Naive thymus-derived CD4-positive, alpha-beta T cell (primary cell): ENCODE measurements at regions of chr12 and their contacts with region 1.

Region 1: DNA sequence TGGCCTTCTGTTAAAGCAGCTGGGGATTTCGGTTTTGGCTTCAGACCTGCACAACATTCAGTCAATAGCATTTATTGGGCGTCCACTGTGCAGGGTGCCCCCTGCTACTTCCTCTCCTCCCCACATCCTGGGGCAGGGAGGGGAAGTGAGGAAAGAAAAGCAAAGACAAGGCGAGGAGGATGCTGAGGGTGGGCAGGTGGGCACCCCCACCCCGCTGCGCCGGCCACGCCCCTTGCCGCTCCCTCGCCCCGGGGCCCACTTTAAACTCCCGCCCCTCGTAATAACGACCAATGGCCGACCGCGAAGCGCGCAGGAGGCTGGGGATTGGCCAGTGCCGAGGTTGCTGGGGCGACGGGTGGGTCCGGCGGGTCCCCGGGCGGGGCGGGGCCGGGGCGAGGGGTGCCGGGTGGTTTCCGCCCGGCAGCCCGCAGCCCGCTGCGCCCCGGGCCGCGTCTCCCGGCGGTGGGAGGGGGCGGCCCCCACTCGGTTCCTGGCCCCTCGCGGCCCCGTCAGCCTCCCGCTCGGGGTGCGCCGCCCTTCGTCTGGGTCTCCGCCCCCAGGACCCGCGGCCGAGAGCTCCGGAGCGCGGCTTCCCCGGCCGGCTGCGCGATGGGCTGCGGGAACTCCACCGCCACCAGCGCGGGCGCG is at the start of gene C12orf75:
- DNase-seq: peak; percentile 62 to 94 (median 72)
- ATAC-seq: peak; percentile 91
- H3K4me3 ChIP-seq: peak within 1 kb of the TSS; percentile 56
- H3K4me3 Mint-ChIP-seq: peak within 1 kb of the TSS; percentile 82 to 94 (median 90)
- H3K27ac ChIP-seq: peak within 1 kb of the TSS; percentile 64
- H3K27ac Mint-ChIP-seq: peak within 1 kb of the TSS; percentile 65 to 95 (median 86)
- H3K4me1 ChIP-seq: peaks cover 12 to 57% of the 10 kb centered on the region in 2 donors
- H3K4me1 Mint-ChIP-seq: peaks cover 16 to 74% (median 24%) of the 10 kb centered on the region in 7 donors
- H3K27me3 ChIP-seq: no peaks in the 10 kb centered on the region
- H3K27me3 Mint-ChIP-seq: no peaks in the 10 kb centered on the region
- total RNA-seq, gene C12orf75: 5.5 to 146 (median 13.0) TPM

Region 2: DNA sequence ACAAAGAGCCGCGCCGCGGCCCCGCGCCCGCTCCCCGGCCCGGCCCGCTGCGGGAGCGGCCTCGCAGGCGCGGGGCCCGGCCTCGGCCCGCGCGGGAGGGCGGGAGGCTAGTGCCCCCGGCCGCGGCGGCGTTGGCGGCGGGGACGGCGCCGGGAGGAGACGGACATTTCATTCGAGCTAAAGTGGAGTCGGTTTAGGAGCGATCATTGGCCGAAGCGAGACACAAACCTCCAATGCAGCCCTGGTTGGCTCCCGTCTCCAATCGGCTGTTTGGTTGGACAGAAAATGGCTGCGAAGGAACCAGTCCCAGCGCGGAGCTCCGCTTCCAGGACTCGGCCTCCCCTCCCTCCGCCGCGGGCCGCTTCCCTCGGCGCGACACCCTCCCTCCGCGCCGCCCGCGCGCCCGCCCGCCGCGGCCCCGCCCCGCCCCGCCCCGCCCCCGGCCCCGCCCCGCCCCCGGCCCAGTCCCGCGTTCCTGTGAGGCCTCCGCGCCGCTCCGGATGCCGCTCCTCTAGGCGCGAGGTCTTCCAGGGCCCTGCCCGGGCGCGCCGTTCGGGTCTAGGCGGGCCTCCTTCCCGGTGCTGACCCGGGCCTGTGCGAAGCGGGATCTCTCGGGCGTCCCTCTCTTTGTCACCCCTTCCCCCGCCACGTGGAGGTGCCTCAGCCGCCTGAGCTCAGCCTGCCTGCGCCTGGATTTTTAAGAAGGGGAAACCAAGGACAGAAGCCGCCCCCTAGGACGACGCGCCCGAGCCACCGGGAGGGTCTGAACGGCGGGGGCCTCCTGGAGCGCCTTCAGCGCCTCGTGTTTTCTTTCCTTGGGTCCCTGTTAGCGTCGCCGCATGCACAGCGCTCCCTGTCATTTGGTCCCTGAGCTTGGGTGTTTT is 1192.3 kb before region 1 on chr12 and contains the start of gene NFYB:
- CTCF ChIA-PET with region 1: no interaction called
- POLR2A ChIA-PET with region 1: interaction called, 3 read pairs
- intact Hi-C with region 1: loop called (anchors 2 kb)
- DNase-seq: peak; percentile 90 to 96 (median 94)
- ATAC-seq: peak; percentile 97
- H3K4me3 ChIP-seq: peak within 1 kb of the TSS; percentile 69
- H3K4me3 Mint-ChIP-seq: peak within 1 kb of the TSS; percentile 81 to 93 (median 90)
- H3K27ac ChIP-seq: peak within 1 kb of the TSS; percentile 72
- H3K27ac Mint-ChIP-seq: peak within 1 kb of the TSS; percentile 71 to 95 (median 89)
- H3K4me1 ChIP-seq: peaks cover 10 to 23% of the 10 kb centered on the region in 2 donors
- H3K4me1 Mint-ChIP-seq: peaks cover 0 to 22% (median 9%) of the 10 kb centered on the region in 7 donors
- H3K27me3 ChIP-seq: no peaks in the 10 kb centered on the region
- H3K27me3 Mint-ChIP-seq: peaks cover 0 to 24% (median 0%) of the 10 kb centered on the region in 5 donors
- total RNA-seq, gene NFYB: 11.6 to 25.9 (median 24.4) TPM

Region 3: GRCh38 chr12:104986022-104986941 is 344.1 kb before region 1 on chr12 and contains the start of gene NOPCHAP1:
- CTCF ChIA-PET with region 1: no interaction called
- POLR2A ChIA-PET with region 1: no interaction called
- intact Hi-C with region 1: loop called in 1 of 2 experiments (anchors 5 kb)
- DNase-seq: peak; percentile 64 to 84 (median 78)
- ATAC-seq: peak; percentile 100
- H3K4me3 ChIP-seq: peak within 1 kb of the TSS; percentile 91
- H3K4me3 Mint-ChIP-seq: peak within 1 kb of the TSS; percentile 90 to 95 (median 94)
- H3K27ac ChIP-seq: peak within 1 kb of the TSS; percentile 73
- H3K27ac Mint-ChIP-seq: peak within 1 kb of the TSS; percentile 63 to 87 (median 74)
- H3K4me1 ChIP-seq: peaks cover 12 to 13% of the 10 kb centered on the region in 2 donors
- H3K4me1 Mint-ChIP-seq: peaks cover 19 to 47% (median 37%) of the 10 kb centered on the region in 7 donors
- H3K27me3 ChIP-seq: no peaks in the 10 kb centered on the region
- H3K27me3 Mint-ChIP-seq: peaks cover 0 to 13% (median 5%) of the 10 kb centered on the region in 5 donors
- total RNA-seq, gene NOPCHAP1: 10.5 to 18.0 (median 15.2) TPM

Region 4: DNA sequence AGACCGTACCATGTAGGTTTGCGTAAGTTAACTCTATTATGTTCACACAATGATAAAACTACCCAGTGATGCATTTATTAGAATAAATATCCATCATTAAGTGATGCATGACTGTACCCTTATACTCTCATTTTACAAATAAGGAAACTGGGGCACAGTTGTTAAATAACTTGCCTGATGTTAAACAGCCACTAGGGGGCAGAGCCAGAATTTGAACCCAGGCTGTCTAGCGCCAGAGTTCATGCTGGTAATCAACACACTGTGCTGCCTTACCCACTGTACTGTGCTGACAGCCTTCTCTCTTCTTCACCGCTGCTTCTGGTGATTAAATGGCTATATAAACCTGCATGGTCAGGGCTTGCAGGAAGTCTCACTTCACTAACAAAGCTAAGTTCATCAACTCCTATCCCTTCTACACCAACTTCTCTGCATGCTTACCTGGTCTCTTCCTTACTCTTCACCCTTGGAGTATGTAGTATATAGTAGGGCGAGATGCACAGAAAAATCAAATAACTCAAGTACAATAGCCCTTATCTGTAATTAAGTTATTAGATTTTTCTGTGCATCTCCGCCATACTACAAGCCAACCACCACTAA is 50.8 kb before region 1 on chr12:
- CTCF ChIA-PET with region 1: no interaction called
- POLR2A ChIA-PET with region 1: no interaction called
- intact Hi-C with region 1: loop called in 1 of 2 experiments (anchors 5 kb)
- DNase-seq: peak in 6 of 9 donors; percentile 10 to 39 (median 25)
- ATAC-seq: peak; percentile 72
- H3K4me3 ChIP-seq: no peak overlapping the region
- H3K4me3 Mint-ChIP-seq: no peak overlapping the region
- H3K27ac ChIP-seq: no peak overlapping the region
- H3K27ac Mint-ChIP-seq: no peak overlapping the region
- H3K4me1 ChIP-seq: no peaks in the 10 kb centered on the region
- H3K4me1 Mint-ChIP-seq: peaks cover 0 to 6% (median 0%) of the 10 kb centered on the region in 7 donors
- H3K27me3 ChIP-seq: no peaks in the 10 kb centered on the region
- H3K27me3 Mint-ChIP-seq: peaks cover 0 to 14% (median 4%) of the 10 kb centered on the region in 5 donors

Region 5: GRCh38 chr12:106247674-106248311 is 917.4 kb after region 1 on chr12 and contains the start of gene CKAP4:
- CTCF ChIA-PET with region 1: no interaction called
- POLR2A ChIA-PET with region 1: no interaction called
- intact Hi-C with region 1: loop called in 1 of 2 experiments (anchors 5 kb)
- DNase-seq: peak; percentile 45 to 65 (median 55)
- ATAC-seq: peak; percentile 59
- H3K4me3 ChIP-seq: peak within 1 kb of the TSS; percentile 69
- H3K4me3 Mint-ChIP-seq: peak within 1 kb of the TSS; percentile 81 to 92 (median 86)
- H3K27ac ChIP-seq: peak within 1 kb of the TSS; percentile 80
- H3K27ac Mint-ChIP-seq: peak within 1 kb of the TSS; percentile 58 to 98 (median 94)
- H3K4me1 ChIP-seq: peaks cover 17 to 22% of the 10 kb centered on the region in 2 donors
- H3K4me1 Mint-ChIP-seq: peaks cover 13 to 37% (median 31%) of the 10 kb centered on the region in 7 donors
- H3K27me3 ChIP-seq: no peaks in the 10 kb centered on the region
- H3K27me3 Mint-ChIP-seq: peaks cover 0 to 19% (median 0%) of the 10 kb centered on the region in 5 donors
- total RNA-seq, gene CKAP4: 4.3 to 27.2 (median 13.0) TPM

Region 6: DNA sequence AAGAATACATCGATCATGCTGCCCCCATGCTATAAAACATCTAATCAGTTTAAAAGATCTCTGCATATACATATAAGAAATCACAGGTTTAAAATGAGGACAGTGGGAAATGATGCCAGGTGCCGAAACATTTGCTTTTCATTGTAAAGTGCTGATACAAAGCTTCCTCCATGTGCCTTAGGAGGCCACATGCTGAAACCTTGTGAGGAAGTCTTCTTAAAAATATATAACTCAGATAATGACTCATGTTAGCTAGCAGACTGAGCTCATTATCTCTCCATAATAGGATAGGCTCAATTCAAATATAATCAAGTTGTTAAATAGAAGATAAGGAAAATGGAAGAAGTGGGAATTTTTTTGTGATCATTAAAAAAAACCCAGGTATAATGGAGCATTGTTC is 1318.3 kb after region 1 on chr12:
- CTCF ChIA-PET with region 1: no interaction called
- POLR2A ChIA-PET with region 1: no interaction called
- intact Hi-C with region 1: no loop called
- DNase-seq: no peak
- ATAC-seq: no peak
- H3K4me3 ChIP-seq: no peak overlapping the region
- H3K4me3 Mint-ChIP-seq: no peak overlapping the region
- H3K27ac ChIP-seq: no peak overlapping the region
- H3K27ac Mint-ChIP-seq: no peak overlapping the region
- H3K4me1 ChIP-seq: no peaks in the 10 kb centered on the region
- H3K4me1 Mint-ChIP-seq: peaks cover 0 to 2% (median 0%) of the 10 kb centered on the region in 7 donors
- H3K27me3 ChIP-seq: no peaks in the 10 kb centered on the region
- H3K27me3 Mint-ChIP-seq: peaks cover 0 to 14% (median 5%) of the 10 kb centered on the region in 5 donors